ENCODE measurements at regions of chr15 and their contacts with region 1.

Region 1: GRCh38 chr15:56918046-56918938 is at the start of gene TCF12:
- DNase-seq: peak; percentile 89 to 94
- H3K4me3 ChIP-seq: peak within 1 kb of the TSS; percentile 84 to 96 (median 92)
- H3K27ac ChIP-seq: peak within 1 kb of the TSS; percentile 88
- H3K4me1 ChIP-seq: peaks cover 2 to 6% (median 4%) of the 10 kb centered on the region in 4 experiments; a peak in 6 of 7 replicates
- H3K27me3 ChIP-seq: peaks cover 0 to 3% (median 0%) of the 10 kb centered on the region in 4 experiments; a peak in 3 of 7 replicates
- CTCF ChIP-seq: peak in 2 of 3 experiments; percentile 37 to 38; a peak in 2 of 4 replicates
- EP300 ChIP-seq: peak in 1 of 2 experiments; percentile 88; a peak in 2 of 3 replicates
- POLR2A ChIP-seq: peak; percentile 74 to 75; a peak in 2 of 3 replicates
- RAD21 ChIP-seq: peak; percentile 31 to 43; a peak in 2 of 4 replicates
- total RNA-seq, gene TCF12: 90.9 and 101 TPM in 2 replicates

Region 2: DNA sequence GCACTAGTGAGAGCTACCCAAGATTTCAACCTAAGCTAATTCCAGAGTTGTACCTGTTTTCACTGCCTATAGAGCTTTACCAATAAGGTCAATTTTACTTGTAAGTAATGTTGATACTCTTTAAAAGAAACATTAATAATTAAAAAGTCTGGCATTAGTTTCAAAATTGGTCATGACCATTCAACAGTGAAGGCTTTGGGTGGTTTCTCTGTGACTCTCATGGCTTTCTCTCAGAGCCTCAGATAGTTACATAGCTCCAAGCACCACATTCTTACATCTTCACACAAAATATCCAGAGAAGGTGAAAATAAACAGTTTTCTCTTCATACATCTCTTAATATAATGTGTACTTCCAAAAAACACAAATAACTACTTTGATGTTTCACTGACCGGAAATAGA is 61.4 kb before region 1 on chr15:
- CTCF ChIA-PET with region 1: no interaction called
- POLR2A ChIA-PET with region 1: no interaction called
- DNase-seq: no peak
- H3K4me3 ChIP-seq: no peak overlapping the region
- H3K27ac ChIP-seq: no peak overlapping the region
- H3K4me1 ChIP-seq: no peaks in the 10 kb centered on the region
- H3K27me3 ChIP-seq: no peaks in the 10 kb centered on the region
- CTCF ChIP-seq: no peak
- EP300 ChIP-seq: no peak
- POLR2A ChIP-seq: no peak
- RAD21 ChIP-seq: no peak

Region 3: GRCh38 chr15:56869573-56869972 is 48.7 kb before region 1 on chr15:
- CTCF ChIA-PET with region 1: interaction called, 10 read pairs
- POLR2A ChIA-PET with region 1: interaction called, 9 read pairs
- DNase-seq: peak in 1 of 2 experiments; percentile 61
- H3K4me3 ChIP-seq: no peak overlapping the region
- H3K27ac ChIP-seq: no peak overlapping the region
- H3K4me1 ChIP-seq: peaks cover 0 to 6% (median 0%) of the 10 kb centered on the region in 4 experiments; a peak in 3 of 7 replicates
- H3K27me3 ChIP-seq: no peaks in the 10 kb centered on the region
- CTCF ChIP-seq: peak; percentile 40 to 66 (median 66)
- EP300 ChIP-seq: no peak
- POLR2A ChIP-seq: no peak
- RAD21 ChIP-seq: peak; percentile 86 to 91

Region 4: DNA sequence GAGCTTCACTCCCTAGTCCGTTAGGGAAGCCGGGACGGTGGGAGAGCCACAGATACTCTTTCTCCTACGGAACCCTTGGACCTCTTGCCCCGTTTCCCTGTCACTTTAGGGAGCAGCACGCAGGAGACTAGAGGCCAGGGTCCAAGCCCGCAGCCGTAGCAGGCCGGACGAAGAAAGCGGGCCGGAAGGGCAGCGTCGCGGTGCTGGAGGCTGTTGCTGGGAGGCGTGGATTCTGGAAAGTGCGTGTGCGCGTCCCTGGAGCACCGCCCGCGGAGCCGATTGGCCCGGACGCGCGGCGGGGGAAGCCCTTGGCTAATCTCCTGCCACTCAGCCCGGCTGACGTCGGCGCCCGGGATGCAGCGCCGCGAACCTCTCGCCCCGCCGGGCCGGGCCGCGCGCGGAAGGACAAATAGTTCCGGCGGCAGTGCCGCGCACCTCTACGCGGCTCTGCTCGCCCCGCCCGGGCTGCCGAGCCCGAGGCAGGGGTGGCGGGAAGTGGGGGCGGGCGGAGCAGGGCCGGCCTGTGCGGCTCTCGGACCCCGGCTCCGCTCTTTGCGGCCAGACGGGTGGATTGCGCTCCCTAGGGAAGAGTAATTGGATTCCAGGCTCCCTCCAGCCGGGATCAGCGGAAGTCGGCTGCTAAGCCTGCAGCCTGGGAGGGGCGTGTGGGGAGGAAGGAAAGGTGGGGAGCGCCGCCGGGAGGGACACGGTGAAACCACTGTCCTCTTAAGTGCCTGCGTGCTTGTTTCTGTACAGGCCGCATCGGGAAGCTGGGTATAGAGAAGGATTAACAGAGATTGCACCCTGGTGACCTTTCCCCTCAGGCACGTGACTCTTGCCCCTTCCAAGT is 31.1 kb before region 1 on chr15:
- CTCF ChIA-PET with region 1: interaction called, 3 read pairs
- POLR2A ChIA-PET with region 1: interaction called, 69 read pairs
- DNase-seq: peak; percentile 68 to 90
- H3K4me3 ChIP-seq: peak overlapping the region; percentile 61 to 71 (median 66)
- H3K27ac ChIP-seq: peak overlapping the region; percentile 62
- H3K4me1 ChIP-seq: peaks cover 0 to 7% (median 5%) of the 10 kb centered on the region in 4 experiments; a peak in 4 of 7 replicates
- H3K27me3 ChIP-seq: peaks cover 0 to under 1% (median 0%) of the 10 kb centered on the region in 4 experiments; a peak in 2 of 7 replicates
- CTCF ChIP-seq: peak in 1 of 3 experiments; percentile 9; a peak in 2 of 4 replicates
- EP300 ChIP-seq: no peak; a peak in 1 of 3 replicates
- POLR2A ChIP-seq: peak; percentile 36 to 57
- RAD21 ChIP-seq: peak; percentile 4 to 29; a peak in 2 of 4 replicates

Region 5: GRCh38 chr15:56892659-56893356 is 25.5 kb before region 1 on chr15:
- CTCF ChIA-PET with region 1: interaction called, 3 read pairs
- POLR2A ChIA-PET with region 1: interaction called, 69 read pairs
- DNase-seq: no peak
- H3K4me3 ChIP-seq: no peak overlapping the region
- H3K27ac ChIP-seq: no peak overlapping the region
- H3K4me1 ChIP-seq: no peaks in the 10 kb centered on the region
- H3K27me3 ChIP-seq: peaks cover 5 to 15% (median 11%) of the 10 kb centered on the region in 4 experiments; a peak in 6 of 7 replicates
- CTCF ChIP-seq: no peak
- EP300 ChIP-seq: no peak
- POLR2A ChIP-seq: no peak
- RAD21 ChIP-seq: no peak

Region 6: GRCh38 chr15:56929399-56929798 is 11.1 kb after region 1 on chr15:
- CTCF ChIA-PET with region 1: interaction called, 3 read pairs
- POLR2A ChIA-PET with region 1: interaction called, 53 read pairs
- DNase-seq: no peak
- H3K4me3 ChIP-seq: no peak overlapping the region
- H3K27ac ChIP-seq: no peak overlapping the region
- H3K4me1 ChIP-seq: peaks cover 0 to 3% (median 1%) of the 10 kb centered on the region in 4 experiments; a peak in 3 of 7 replicates
- H3K27me3 ChIP-seq: no peaks in the 10 kb centered on the region
- CTCF ChIP-seq: no peak
- EP300 ChIP-seq: no peak
- POLR2A ChIP-seq: no peak
- RAD21 ChIP-seq: no peak

Region 7: DNA sequence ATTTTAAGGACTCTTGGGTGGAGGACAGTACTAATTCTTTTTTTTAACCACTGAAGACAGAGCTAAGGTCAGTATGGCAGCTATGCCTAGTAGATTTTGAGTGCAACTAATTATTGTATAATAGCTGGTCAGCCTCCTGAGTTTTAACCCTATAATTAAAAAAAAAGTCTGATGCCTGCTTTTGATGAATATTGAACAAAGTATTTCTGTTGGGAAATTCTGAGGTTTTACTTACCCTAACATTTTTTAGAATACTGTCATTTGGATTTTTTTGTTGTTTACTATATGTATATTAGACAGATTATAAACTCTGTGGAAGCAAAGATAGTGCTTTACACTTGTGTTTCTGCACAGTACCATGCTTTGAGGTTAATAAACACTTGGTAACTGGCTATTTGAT is 21.0 kb after region 1 on chr15:
- CTCF ChIA-PET with region 1: interaction called, 4 read pairs
- POLR2A ChIA-PET with region 1: interaction called, 12 read pairs
- DNase-seq: no peak
- H3K4me3 ChIP-seq: no peak overlapping the region
- H3K27ac ChIP-seq: no peak overlapping the region
- H3K4me1 ChIP-seq: 0 out of 7 replicates have a peak, but pooled peaks cover 0 to 2% (median 0%) of the 10 kb centered on the region in 4 experiments
- H3K27me3 ChIP-seq: no peaks in the 10 kb centered on the region
- CTCF ChIP-seq: no peak
- EP300 ChIP-seq: no peak
- POLR2A ChIP-seq: no peak
- RAD21 ChIP-seq: no peak

Measured in H1 (cell line).